AG04450 (cell line): ENCODE measurements at regions of chr16 and their contacts with region 1.

Region 1: DNA sequence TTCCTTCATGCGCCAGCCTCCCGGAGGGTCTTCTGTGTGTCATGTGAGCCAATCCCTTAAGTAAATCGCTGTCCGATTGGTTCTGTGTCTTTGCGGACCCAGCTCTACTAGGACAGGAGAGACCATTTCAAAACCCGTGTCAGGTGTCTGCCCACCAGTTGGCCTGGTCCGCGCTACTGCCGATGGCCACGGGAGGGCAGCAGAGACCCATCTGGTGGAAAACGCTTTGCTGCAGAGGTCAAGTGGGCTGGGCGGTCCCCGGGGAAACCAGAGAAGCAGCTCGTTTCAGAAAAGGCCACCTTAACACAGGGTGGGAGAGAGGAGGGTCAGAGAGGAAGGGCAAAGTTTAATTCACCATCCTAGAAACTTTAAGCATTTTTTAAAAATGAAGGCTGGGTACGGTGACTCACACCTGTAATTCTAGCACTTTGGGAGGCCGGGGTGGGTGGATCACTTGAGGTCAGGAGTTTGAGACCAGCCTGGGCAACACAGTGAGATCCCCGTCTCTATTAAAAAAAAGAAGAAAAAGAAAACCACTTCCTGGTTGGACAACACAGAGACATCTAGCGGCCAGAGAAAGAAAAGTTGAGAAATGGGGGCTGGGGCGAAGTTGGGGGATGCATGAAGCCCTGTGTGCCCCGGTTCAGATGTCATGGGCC is 2.8 kb upstream of the CIBAR2 start:
- DNase-seq: peak; percentile 56
- H3K4me3 ChIP-seq: no peak overlapping the region
- H3K27ac ChIP-seq: peak overlapping the region; percentile 61
- H3K27me3 ChIP-seq: no peaks in the 10 kb centered on the region
- CTCF ChIP-seq: peak; percentile 99

Region 2: GRCh38 chr16:84785843-84786581 is 329.0 kb before region 1 on chr16:
- CTCF ChIA-PET with region 1: no interaction called
- POLR2A ChIA-PET with region 1: no interaction called
- DNase-seq: no peak
- H3K4me3 ChIP-seq: no peak overlapping the region
- H3K27ac ChIP-seq: peak overlapping the region; percentile 11
- H3K27me3 ChIP-seq: no peaks in the 10 kb centered on the region
- CTCF ChIP-seq: no peak

Region 3: DNA sequence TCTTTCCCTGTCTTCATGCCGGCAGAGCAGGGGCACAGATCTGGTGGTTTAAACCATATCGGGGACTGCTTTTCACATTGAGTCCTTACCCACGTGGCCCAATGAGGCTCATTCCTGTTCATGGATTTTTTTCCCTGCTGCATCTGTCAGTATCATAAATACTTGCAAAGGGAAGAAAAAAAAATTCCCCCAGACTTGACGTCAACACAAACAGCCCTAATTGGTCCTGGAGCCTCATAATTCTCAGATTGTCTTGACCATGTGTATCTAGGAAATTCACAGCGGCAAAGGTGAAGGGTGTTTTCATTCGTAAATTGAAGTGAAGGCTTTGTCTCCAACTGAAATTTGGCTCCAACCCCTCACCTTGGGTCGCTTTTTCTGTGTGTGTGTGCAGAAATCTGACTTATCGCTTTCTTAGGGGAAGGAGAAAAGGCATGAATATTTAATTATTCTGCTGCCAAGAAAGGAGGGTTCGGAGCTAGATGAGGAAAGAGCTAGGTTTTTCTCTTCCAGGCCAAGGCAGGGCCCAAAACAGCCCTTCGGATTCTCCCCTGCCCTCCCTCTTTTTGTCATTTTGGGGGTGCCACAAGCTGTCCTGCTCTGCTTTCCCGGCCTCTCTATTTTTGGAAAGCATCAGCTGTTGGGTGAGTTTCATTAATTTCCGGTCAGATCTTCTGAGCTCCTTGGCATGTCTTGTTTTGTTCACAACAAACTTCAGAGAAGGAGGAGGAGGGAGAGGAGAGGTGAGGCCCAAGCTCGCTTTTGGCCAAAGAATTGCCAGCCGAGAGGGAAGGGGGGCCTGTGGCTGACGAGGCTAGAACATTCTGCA is 15.1 kb after region 1 on chr16:
- CTCF ChIA-PET with region 1: interaction called, 22 read pairs
- POLR2A ChIA-PET with region 1: no interaction called
- DNase-seq: no peak
- H3K4me3 ChIP-seq: no peak overlapping the region
- H3K27ac ChIP-seq: peak overlapping the region; percentile 76
- H3K27me3 ChIP-seq: no peaks in the 10 kb centered on the region
- CTCF ChIP-seq: no peak

Region 4: GRCh38 chr16:85245307-85246172 is 130.5 kb after region 1 on chr16:
- CTCF ChIA-PET with region 1: interaction called, 18 read pairs
- POLR2A ChIA-PET with region 1: no interaction called
- DNase-seq: peak; percentile 50
- H3K4me3 ChIP-seq: no peak overlapping the region
- H3K27ac ChIP-seq: no peak overlapping the region
- H3K27me3 ChIP-seq: no peaks in the 10 kb centered on the region
- CTCF ChIP-seq: peak; percentile 96

Region 5: GRCh38 chr16:85253084-85253941 is 138.3 kb after region 1 on chr16:
- CTCF ChIA-PET with region 1: interaction called, 27 read pairs
- POLR2A ChIA-PET with region 1: no interaction called
- DNase-seq: no peak
- H3K4me3 ChIP-seq: no peak overlapping the region
- H3K27ac ChIP-seq: no peak overlapping the region
- H3K27me3 ChIP-seq: no peaks in the 10 kb centered on the region
- CTCF ChIP-seq: peak; percentile 83

Region 6: DNA sequence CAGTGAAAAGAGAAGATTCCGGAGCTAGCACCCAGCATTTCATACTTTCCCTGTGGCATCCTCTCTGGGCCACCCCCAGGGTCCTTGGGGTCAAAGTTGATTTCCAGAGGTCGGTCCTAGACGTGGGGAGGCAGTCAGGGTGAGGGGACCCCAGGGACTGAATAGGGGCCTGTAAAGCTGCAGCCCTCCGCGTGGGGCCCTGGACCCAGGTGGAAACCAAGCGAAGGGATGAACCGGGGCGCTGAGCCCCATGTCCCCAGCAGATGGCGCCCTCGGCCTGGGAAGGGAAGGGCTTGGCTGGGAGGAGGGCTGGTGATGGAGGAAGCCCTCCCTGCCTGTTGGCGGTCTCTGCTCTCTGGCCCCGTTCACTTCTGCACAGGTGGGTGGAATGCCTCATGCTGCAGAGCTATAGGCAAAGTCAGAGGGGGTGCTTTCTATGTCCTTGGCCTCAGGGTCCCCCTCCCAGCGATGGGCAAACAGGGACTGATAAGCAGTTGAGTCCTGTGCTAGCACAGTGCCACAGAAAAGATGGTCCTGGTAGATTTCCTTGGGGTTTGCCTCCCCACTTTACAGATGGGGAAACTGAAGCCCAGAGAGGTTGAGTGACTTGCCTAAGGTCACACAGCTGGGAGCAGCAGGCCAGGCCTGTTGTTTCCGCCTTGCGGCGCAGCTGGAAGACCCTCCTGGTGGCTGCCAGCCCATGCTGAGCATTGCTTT is 160.7 kb after region 1 on chr16:
- CTCF ChIA-PET with region 1: interaction called, 10 read pairs
- POLR2A ChIA-PET with region 1: interaction called, 3 read pairs
- DNase-seq: no peak
- H3K4me3 ChIP-seq: no peak overlapping the region
- H3K27ac ChIP-seq: no peak overlapping the region
- H3K27me3 ChIP-seq: no peaks in the 10 kb centered on the region
- CTCF ChIP-seq: peak; percentile 96